PC-9 (cell line): ENCODE measurements at regions of chr9 and their contacts with region 1.

Region 1: GRCh38 chr9:128339771-128340690 is at the start of gene SLC27A4:
- DNase-seq: peak; percentile 79 to 92
- H3K4me3 ChIP-seq: peak within 1 kb of the TSS; percentile 85
- H3K27ac ChIP-seq: peak within 1 kb of the TSS; percentile 68
- H3K4me1 ChIP-seq: peaks cover 9% of the 10 kb centered on the region; the same call in 1 of the 2 replicates
- H3K27me3 ChIP-seq: no peaks in the 10 kb centered on the region
- CTCF ChIP-seq: no peak
- total RNA-seq, gene SLC27A4: 27.3 and 30.4 TPM in 2 replicates

Region 2: GRCh38 chr9:128175102-128175563 is 164.9 kb before region 1 on chr9:
- CTCF ChIA-PET with region 1: interaction called, 13 read pairs
- POLR2A ChIA-PET with region 1: no interaction called
- intact Hi-C with region 1: no loop called
- DNase-seq: no peak
- H3K4me3 ChIP-seq: no peak overlapping the region
- H3K27ac ChIP-seq: no peak overlapping the region
- H3K4me1 ChIP-seq: peaks cover 18% of the 10 kb centered on the region
- H3K27me3 ChIP-seq: no peaks in the 10 kb centered on the region
- CTCF ChIP-seq: no peak

Region 3: GRCh38 chr9:128203024-128203706 is 136.9 kb before region 1 on chr9 and contains the start of gene DNM1:
- CTCF ChIA-PET with region 1: interaction called, 17 read pairs
- POLR2A ChIA-PET with region 1: no interaction called
- intact Hi-C with region 1: no loop called
- DNase-seq: peak in 1 of 2 experiments; percentile 77
- H3K4me3 ChIP-seq: peak within 1 kb of the TSS; percentile 68
- H3K27ac ChIP-seq: no peak within 1 kb of the TSS
- H3K4me1 ChIP-seq: 0 out of 2 replicates have a peak, but pooled peaks cover 5% of the 10 kb centered on the region
- H3K27me3 ChIP-seq: no peaks in the 10 kb centered on the region
- CTCF ChIP-seq: peak; percentile 60
- total RNA-seq, gene DNM1: 134 and 148 TPM in 2 replicates

Region 4: GRCh38 chr9:128322404-128323211 is 17.4 kb before region 1 on chr9 and contains the starts of genes COQ4 and TRUB2:
- CTCF ChIA-PET with region 1: no interaction called
- POLR2A ChIA-PET with region 1: no interaction called
- intact Hi-C with region 1: loop called (anchors 2 kb)
- DNase-seq: peak; percentile 88 to 94
- H3K4me3 ChIP-seq: peak within 1 kb of the TSS; percentile 100
- H3K27ac ChIP-seq: peak within 1 kb of the TSS; percentile 74
- H3K4me1 ChIP-seq: peaks cover 21% of the 10 kb centered on the region
- H3K27me3 ChIP-seq: no peaks in the 10 kb centered on the region
- CTCF ChIP-seq: no peak
- total RNA-seq, gene COQ4: 81.8 and 89.5 TPM in 2 replicates
- total RNA-seq, gene TRUB2: 47.6 and 62.1 TPM in 2 replicates